AG04450 (cell line): ENCODE measurements at regions of chr1 and their contacts with region 1.

Region 1: DNA sequence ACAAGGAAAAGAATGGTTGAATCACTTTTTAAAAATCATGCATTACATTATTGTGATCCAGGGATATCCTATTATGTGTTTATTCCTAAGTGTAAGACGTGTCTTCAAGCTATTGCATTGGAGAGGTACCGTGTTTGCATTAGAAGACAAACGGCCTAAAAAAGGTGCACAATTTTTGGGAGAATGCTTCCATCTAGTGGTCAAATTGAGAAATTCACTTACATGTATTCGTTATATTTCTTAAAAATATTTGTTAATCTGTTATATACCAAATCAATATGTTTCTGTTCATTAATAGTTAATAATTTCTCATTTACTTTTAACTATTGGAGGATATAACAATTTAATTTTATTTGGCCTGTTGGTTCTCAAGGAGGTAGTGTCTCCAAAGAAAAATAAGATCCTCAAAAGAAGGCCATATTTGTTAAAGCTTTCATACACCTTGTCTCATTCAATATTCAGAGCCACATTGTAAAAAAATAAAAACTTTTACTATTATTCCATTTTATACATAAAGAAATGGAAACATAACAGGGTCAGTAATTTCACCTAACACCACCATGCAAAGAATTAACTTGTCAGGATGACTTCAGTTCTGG is 40.5 kb upstream of the KCTD3 start:
- DNase-seq: peak; percentile 29
- H3K4me3 ChIP-seq: no peak overlapping the region
- H3K27ac ChIP-seq: no peak overlapping the region
- H3K27me3 ChIP-seq: no peaks in the 10 kb centered on the region
- CTCF ChIP-seq: peak; percentile 58

Region 2: GRCh38 chr1:214637722-214638458 is 888.8 kb before region 1 on chr1:
- CTCF ChIA-PET with region 1: interaction called, 99 read pairs
- POLR2A ChIA-PET with region 1: interaction called, 3 read pairs
- DNase-seq: peak; percentile 24
- H3K4me3 ChIP-seq: no peak overlapping the region
- H3K27ac ChIP-seq: no peak overlapping the region
- H3K27me3 ChIP-seq: no peaks in the 10 kb centered on the region
- CTCF ChIP-seq: peak; percentile 84

Region 3: DNA sequence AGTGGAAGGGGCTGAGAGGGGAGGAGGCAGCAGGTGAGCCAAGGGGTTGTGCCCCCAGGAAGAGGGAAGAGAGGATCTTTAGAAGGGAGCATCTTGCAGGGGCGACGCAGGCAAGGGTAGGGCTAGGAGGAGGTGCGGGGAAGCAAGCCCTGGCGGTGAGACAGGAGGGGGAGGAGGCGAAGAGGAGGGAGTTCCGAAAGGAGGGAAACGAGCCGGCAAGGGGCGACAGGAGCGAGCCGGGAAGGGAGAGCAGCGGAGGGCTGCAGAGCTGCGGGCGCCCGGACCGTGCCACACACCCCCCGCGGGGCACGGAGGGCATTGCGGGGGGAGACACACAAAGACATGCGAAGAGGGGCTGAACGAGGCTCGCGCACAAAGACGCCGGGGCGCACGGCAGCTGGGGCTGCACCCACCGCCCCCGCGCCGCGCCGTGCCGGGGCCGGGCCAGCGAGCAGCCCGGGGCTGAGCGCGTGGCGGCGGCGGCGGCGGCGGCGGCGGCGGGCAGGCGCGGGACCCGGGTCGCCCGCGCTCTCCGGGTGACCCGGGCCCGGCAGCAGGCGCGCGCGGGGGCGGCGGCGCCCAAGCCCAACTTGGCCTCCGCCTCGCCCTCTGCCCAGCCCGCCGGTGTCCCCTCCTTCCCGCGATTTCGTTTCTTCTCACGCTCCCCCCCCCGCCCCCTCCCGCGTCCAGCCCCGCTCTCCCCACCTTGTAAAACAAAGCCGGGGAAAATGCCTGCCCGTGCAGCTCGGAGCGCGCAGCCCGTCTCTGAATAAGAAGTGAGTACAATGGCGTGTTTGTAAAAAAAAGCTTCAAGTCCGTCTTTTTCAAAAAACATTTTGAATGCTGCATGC is 443.9 kb before region 1 on chr1 and contains the start of gene KCNK2:
- CTCF ChIA-PET with region 1: interaction called, 10 read pairs
- POLR2A ChIA-PET with region 1: no interaction called
- DNase-seq: no peak
- H3K4me3 ChIP-seq: peak within 1 kb of the TSS; percentile 78
- H3K27ac ChIP-seq: peak within 1 kb of the TSS; percentile 31
- H3K27me3 ChIP-seq: no peaks in the 10 kb centered on the region
- CTCF ChIP-seq: peak; percentile 17; the same call in 1 of the 2 replicates
- polyA plus RNA-seq, gene KCNK2: 19.7 and 22.8 TPM in 2 replicates

Region 4: GRCh38 chr1:215156232-215156631 is 370.4 kb before region 1 on chr1:
- CTCF ChIA-PET with region 1: interaction called, 10 read pairs
- POLR2A ChIA-PET with region 1: no interaction called
- DNase-seq: no peak
- H3K4me3 ChIP-seq: no peak overlapping the region
- H3K27ac ChIP-seq: no peak overlapping the region
- H3K27me3 ChIP-seq: no peaks in the 10 kb centered on the region
- CTCF ChIP-seq: no peak

Region 5: DNA sequence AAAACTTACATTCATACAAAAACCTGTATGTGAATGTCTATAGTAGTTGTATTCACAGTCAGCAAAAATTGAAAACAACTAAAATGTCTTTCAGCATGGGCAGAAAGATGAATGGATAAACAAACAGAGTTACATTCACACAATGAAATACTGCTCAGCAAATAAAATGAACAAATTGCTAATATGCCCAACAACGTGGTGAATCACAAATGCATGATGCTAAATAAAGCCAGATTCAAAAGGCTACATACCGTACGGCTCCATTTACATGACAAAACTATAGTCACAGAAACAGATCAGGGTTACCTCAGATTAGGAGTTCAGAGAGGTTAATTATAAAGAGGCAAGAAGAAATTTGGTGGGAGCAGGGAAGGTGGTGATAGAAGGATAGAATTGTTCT is 60.3 kb before region 1 on chr1:
- CTCF ChIA-PET with region 1: no interaction called
- POLR2A ChIA-PET with region 1: no interaction called
- DNase-seq: no peak
- H3K4me3 ChIP-seq: no peak overlapping the region
- H3K27ac ChIP-seq: no peak overlapping the region
- H3K27me3 ChIP-seq: no peaks in the 10 kb centered on the region
- CTCF ChIP-seq: no peak

Region 6: GRCh38 chr1:215484171-215484939 is 42.3 kb before region 1 on chr1:
- CTCF ChIA-PET with region 1: no interaction called
- POLR2A ChIA-PET with region 1: no interaction called
- DNase-seq: no peak
- H3K4me3 ChIP-seq: no peak overlapping the region
- H3K27ac ChIP-seq: no peak overlapping the region
- H3K27me3 ChIP-seq: no peaks in the 10 kb centered on the region
- CTCF ChIP-seq: no peak